HEK293 (cell line): ENCODE measurements at regions of chr3 and their contacts with region 1.

Region 1: GRCh38 chr3:112097378-112097777 is 11.2 kb downstream of the C3orf52 start:
- H3K4me3 ChIP-seq: no peak overlapping the region
- H3K27ac ChIP-seq: 0 out of 2 replicates have a peak overlapping the region, but pooled peaks have one; percentile 12
- H3K4me1 ChIP-seq: peaks cover 14% of the 10 kb centered on the region; the same call in 1 of the 2 replicates
- CTCF ChIP-seq: no peak

Region 2: GRCh38 chr3:112086076-112086854 is 11.1 kb before region 1 on chr3 and contains the start of gene C3orf52:
- CTCF ChIA-PET with region 1: no interaction called
- POLR2A ChIA-PET with region 1: interaction called, 11 read pairs
- H3K4me3 ChIP-seq: peak within 1 kb of the TSS; percentile 41
- H3K27ac ChIP-seq: peak within 1 kb of the TSS; percentile 78
- H3K4me1 ChIP-seq: peaks cover 14% of the 10 kb centered on the region; the same call in 1 of the 2 replicates
- CTCF ChIP-seq: peak; percentile 39

Region 3: GRCh38 chr3:112111785-112112402 is 14.5 kb after region 1 on chr3:
- CTCF ChIA-PET with region 1: interaction called, 10 read pairs
- POLR2A ChIA-PET with region 1: interaction called, 3 read pairs
- H3K4me3 ChIP-seq: no peak overlapping the region
- H3K27ac ChIP-seq: no peak overlapping the region
- H3K4me1 ChIP-seq: no peaks in the 10 kb centered on the region
- CTCF ChIP-seq: peak; percentile 57; the same call in 1 of the 2 replicates